HepG2 (cell line): ENCODE measurements at regions of chr16 and their contacts with region 1.

Region 1: GRCh38 chr16:48164907-48165726 is 9.3 kb upstream of the ABCC12 start:
- DNase-seq: peak; percentile 82
- ATAC-seq: peak; percentile 89
- H3K4me3 ChIP-seq: peak overlapping the region; percentile 48 to 68 (median 53)
- H3K27ac ChIP-seq: peak overlapping the region; percentile 48
- H3K4me1 ChIP-seq: peaks cover 36% of the 10 kb centered on the region
- H3K27me3 ChIP-seq: 0 out of 5 replicates have a peak, but pooled peaks cover 0 to 4% of the 10 kb centered on the region in 2 experiments
- CTCF ChIP-seq: peak; percentile 99
- EP300 ChIP-seq: peak; percentile 26 to 68; a peak in 2 of 4 replicates
- POLR2A ChIP-seq: peak in 1 of 2 experiments; percentile 23; a peak in 1 of 4 replicates
- RAD21 ChIP-seq: peak; percentile 96

Region 2: GRCh38 chr16:47037746-47038458 is 1127.2 kb before region 1 on chr16:
- CTCF ChIA-PET with region 1: interaction called, 8 read pairs
- POLR2A ChIA-PET with region 1: interaction called, 4 read pairs
- in situ Hi-C with region 1: loop called (anchors 5 kb)
- intact Hi-C with region 1: loop called (anchors 2 kb)
- DNase-seq: peak; percentile 61
- ATAC-seq: peak; percentile 96
- H3K4me3 ChIP-seq: peak overlapping the region; percentile 61 to 80 (median 80)
- H3K27ac ChIP-seq: no peak overlapping the region
- H3K4me1 ChIP-seq: peaks cover 30% of the 10 kb centered on the region
- H3K27me3 ChIP-seq: peaks cover 0 to 41% of the 10 kb centered on the region in 2 experiments; a peak in 4 of 5 replicates
- CTCF ChIP-seq: peak; percentile 98
- EP300 ChIP-seq: 0 out of 4 replicates have a peak, but pooled peaks of 1 of the 2 experiments have one; percentile 8
- POLR2A ChIP-seq: no peak
- RAD21 ChIP-seq: peak; percentile 96

Region 3: DNA sequence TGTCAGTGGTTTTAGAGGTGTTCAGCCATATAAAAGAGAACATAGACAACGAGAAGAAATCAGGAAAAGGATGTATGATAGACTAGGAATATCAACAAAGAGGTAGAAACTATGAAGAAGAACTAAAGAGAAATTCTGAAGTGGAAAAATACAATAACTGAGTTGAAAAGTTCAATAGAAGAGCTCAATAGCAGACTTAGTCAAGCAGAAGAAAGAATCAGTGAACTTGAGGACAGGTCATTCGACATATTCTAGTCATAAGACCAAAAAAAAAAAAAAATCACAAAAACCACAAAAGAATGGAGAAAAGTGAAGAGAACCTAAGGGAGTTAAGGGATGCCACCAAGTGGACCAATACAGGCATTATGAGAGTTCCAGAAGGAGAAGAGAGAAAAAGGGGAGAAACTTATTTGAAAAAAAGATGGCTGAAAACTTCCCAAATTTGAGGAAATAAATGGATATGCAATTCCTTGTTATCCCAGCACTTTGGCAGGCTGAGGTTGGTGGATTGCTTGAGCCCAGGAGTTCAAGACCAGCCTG is 330.6 kb before region 1 on chr16:
- CTCF ChIA-PET with region 1: no interaction called
- POLR2A ChIA-PET with region 1: no interaction called
- in situ Hi-C with region 1: no loop called
- intact Hi-C with region 1: no loop called
- DNase-seq: no peak
- ATAC-seq: no peak
- H3K4me3 ChIP-seq: no peak overlapping the region
- H3K27ac ChIP-seq: no peak overlapping the region
- H3K4me1 ChIP-seq: no peaks in the 10 kb centered on the region
- H3K27me3 ChIP-seq: no peaks in the 10 kb centered on the region
- CTCF ChIP-seq: no peak
- EP300 ChIP-seq: no peak
- POLR2A ChIP-seq: no peak
- RAD21 ChIP-seq: no peak

Region 4: DNA sequence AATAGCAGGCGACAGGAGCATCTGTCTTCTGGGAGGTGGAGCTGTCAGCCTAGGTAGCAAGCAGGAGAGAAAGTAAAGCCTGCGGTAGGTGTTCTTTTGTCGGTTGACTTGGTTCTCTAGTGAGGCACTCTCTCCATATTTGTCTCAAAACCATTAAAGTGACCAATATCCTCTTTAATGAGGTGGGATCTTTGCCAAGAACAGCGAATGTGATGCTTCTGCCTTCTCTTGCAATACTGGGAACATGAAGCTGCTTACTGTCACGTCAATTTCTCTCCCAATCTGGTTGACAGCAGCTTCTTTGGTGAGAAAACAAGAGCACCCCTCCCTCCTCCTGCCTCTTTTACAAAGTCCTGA is 186.0 kb before region 1 on chr16:
- CTCF ChIA-PET with region 1: no interaction called
- POLR2A ChIA-PET with region 1: no interaction called
- in situ Hi-C with region 1: no loop called
- intact Hi-C with region 1: no loop called
- DNase-seq: no peak
- ATAC-seq: no peak
- H3K4me3 ChIP-seq: no peak overlapping the region
- H3K27ac ChIP-seq: no peak overlapping the region
- H3K4me1 ChIP-seq: peaks cover 18% of the 10 kb centered on the region
- H3K27me3 ChIP-seq: peaks cover 0 to 6% of the 10 kb centered on the region in 2 experiments; a peak in 1 of 5 replicates
- CTCF ChIP-seq: no peak
- EP300 ChIP-seq: no peak
- POLR2A ChIP-seq: no peak
- RAD21 ChIP-seq: no peak

Region 5: DNA sequence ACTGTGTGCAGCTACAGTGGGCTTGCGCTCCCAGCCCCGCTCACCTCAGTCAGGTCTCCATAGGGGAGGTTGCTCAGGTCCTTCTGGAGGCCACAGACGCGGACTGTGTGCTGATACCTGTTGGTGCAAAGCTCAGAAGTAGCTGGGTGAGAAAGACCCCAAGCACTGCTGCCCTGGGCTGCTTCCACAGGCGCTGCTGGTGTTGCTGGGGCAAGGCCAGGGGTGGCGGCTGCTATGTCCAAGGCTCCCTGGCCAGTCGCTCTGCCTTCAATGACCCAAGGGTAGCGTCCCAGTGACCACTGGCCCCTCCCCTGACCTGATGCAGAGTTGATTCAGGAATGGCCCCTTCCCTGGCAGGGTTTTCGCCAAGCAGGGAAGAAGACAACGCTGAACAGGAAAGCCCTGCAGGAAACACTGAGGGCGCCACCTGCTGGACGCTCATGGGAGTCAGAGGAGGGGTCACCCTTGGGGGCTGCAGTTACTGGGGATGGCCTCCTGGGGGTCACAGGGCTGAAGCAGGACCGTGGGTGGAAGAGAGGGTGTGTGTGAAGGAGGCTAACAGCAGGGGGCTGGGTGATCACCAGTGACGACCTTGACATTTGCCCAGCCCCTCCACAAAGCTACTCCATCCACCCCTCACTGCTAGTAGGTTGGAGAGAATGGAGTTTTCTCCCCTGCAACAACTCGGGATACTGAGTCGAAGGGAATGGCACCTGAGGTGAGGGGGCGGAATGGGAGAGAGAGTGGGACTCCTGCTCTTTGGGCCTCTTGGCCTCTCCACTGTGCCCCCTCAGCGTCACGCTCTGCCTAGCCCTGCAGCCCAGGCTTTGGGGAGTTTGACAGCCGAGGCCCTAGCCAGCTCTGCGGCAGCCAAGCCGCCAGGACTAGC is 47.7 kb before region 1 on chr16:
- CTCF ChIA-PET with region 1: interaction called, 16 read pairs
- POLR2A ChIA-PET with region 1: no interaction called
- in situ Hi-C with region 1: no loop called
- intact Hi-C with region 1: loop called (anchors 1 kb)
- DNase-seq: peak; percentile 81
- ATAC-seq: peak; percentile 95
- H3K4me3 ChIP-seq: no peak overlapping the region
- H3K27ac ChIP-seq: no peak overlapping the region
- H3K4me1 ChIP-seq: peaks cover 9% of the 10 kb centered on the region
- H3K27me3 ChIP-seq: peaks cover 0 to 36% of the 10 kb centered on the region in 2 experiments; a peak in 3 of 5 replicates
- CTCF ChIP-seq: peak; percentile 90
- EP300 ChIP-seq: no peak
- POLR2A ChIP-seq: no peak
- RAD21 ChIP-seq: peak; percentile 90

Region 6: DNA sequence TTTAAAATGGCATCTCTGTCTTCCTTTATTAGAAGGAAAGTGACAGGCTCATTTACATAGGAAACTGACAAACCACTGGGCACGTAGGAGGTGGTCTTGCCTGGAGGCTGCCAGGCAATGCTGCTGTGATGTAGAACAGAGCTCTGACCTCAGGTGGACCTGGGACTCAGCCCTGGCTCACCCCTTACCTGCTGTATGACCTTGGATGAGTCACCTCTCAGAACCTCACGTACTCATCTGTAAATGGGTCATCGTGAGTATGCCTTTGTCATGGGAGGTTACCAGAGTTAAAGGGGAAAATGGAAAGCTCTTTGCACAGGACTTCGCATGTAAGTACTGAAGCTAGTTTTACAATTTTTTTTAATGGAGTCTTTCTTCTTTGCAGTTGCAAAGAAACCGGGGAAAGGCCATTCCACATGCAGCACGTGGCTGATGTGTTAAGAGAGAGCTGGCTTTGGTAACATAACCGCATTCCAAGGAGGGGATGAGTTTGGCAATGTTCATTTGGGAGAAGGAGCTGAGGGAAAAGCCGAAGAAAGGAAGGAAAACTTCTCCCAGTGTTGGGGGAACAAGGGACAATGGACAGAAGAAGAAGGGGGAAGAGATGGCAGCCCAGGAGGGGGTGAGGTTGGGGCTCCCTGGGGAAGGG is 41.6 kb after region 1 on chr16:
- CTCF ChIA-PET with region 1: no interaction called
- POLR2A ChIA-PET with region 1: interaction called, 20 read pairs
- in situ Hi-C with region 1: no loop called
- intact Hi-C with region 1: loop called (anchors 2 kb)
- DNase-seq: peak; percentile 69
- ATAC-seq: peak; percentile 2; the same call in 1 of the 3 replicates
- H3K4me3 ChIP-seq: no peak overlapping the region
- H3K27ac ChIP-seq: peak overlapping the region; percentile 89
- H3K4me1 ChIP-seq: peaks cover 67% of the 10 kb centered on the region
- H3K27me3 ChIP-seq: no peaks in the 10 kb centered on the region
- CTCF ChIP-seq: no peak
- EP300 ChIP-seq: peak in 1 of 2 experiments; percentile 59; a peak in 1 of 4 replicates
- POLR2A ChIP-seq: no peak
- RAD21 ChIP-seq: no peak